Colonic mucosa (tissue), 4 donors: ENCODE measurements at regions of chr4 and their contacts with region 1.

Region 1: DNA sequence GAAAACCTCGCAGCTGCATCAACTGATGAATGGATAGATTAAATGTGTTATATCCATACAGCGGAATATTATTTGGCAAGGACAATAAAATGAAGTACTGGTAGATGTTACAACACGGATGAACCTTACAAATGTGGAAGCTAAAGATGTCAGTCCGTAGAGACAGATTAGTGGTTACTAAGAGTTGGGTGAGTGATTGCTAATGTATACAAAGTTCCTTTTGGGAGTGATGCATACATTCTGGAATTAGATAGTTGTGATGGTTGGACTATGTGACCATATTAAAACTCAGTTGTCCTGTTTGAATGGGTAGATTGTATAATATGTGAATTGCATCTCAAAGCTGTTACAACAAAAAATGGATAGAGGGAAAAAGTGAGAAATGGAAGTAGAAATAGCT is 2.8 kb downstream of the FIP1L1 start:
- DNase-seq: no peak
- H3K4me3 ChIP-seq: no peak overlapping the region
- H3K27ac ChIP-seq: no peak overlapping the region
- H3K4me1 ChIP-seq: peaks cover 9% of the 10 kb centered on the region
- H3K27me3 ChIP-seq: no peaks in the 10 kb centered on the region
- CTCF ChIP-seq: no peak

Region 2: DNA sequence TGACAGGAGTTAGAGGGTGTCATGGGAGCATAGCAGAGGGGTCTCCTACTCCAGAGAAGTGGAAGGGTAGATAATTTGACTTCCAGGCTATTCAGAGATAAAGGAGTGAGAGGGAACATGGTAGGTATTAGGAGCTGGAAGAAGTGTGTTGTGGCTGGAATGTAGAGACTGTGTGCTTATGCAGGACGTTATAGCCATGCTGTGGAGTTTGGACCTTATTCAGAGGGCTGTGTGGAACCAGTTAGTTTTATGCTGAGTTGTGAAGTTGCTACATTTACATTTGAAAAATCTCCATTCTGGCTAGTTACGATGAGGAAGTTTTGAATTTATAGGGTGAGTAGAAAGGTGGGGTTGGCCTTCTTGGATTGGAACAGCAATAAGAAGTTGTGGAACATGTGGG is 64.7 kb after region 1 on chr4:
- intact Hi-C with region 1: loop called (anchors 10 kb)
- DNase-seq: no peak
- H3K4me3 ChIP-seq: no peak overlapping the region
- H3K27ac ChIP-seq: no peak overlapping the region
- H3K4me1 ChIP-seq: no peaks in the 10 kb centered on the region
- H3K27me3 ChIP-seq: no peaks in the 10 kb centered on the region
- CTCF ChIP-seq: no peak